MCF 10A (cell line): ENCODE measurements at regions of chr5 and their contacts with region 1.

Region 1: GRCh38 chr5:127517480-127518318 is at the start of gene PRRC1:
- DNase-seq: peak; percentile 89
- H3K4me3 Mint-ChIP-seq: peak within 1 kb of the TSS; percentile 77
- H3K27ac Mint-ChIP-seq: peak within 1 kb of the TSS; percentile 59
- H3K4me1 Mint-ChIP-seq: peaks cover 22% of the 10 kb centered on the region
- H3K27me3 Mint-ChIP-seq: no peaks in the 10 kb centered on the region
- CTCF ChIP-seq: no peak
- total RNA-seq, gene PRRC1: 109 and 121 TPM in 2 replicates

Region 2: DNA sequence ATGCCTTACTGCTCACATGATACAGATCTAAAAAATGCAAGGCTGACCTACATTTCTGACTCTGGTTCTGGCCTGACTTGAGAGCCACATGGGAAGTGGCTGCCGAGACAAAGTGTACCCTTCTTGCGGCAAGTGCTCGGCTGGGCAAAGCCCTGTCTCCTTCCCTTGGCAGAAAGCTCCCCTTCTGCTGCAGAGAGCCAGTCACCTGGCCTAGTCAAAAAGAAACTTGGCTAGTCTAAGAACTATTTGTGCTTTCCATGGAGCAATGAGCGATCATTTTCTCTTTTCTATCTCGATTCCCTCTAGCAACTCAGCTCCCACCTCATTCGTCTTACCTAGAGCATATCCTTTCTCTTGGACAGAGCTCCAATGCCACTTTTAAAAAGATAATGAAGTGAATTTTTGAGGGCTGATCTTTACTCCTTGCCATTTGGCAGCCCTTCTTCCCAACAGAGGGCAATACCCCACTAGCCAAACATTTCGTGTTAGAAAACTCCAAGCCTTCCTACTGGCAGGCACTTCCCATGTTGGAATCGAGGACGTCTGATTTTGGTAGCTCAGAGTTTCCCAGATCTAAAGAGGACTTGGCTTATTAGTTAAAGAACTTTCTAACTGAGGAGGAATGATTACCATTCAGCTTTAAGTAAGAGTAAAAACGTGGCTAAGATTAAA is 108.3 kb before region 1 on chr5:
- CTCF ChIA-PET with region 1: no interaction called
- POLR2A ChIA-PET with region 1: no interaction called
- intact Hi-C with region 1: no loop called
- DNase-seq: no peak
- H3K4me3 Mint-ChIP-seq: no peak overlapping the region
- H3K27ac Mint-ChIP-seq: no peak overlapping the region
- H3K4me1 Mint-ChIP-seq: no peaks in the 10 kb centered on the region
- H3K27me3 Mint-ChIP-seq: no peaks in the 10 kb centered on the region
- CTCF ChIP-seq: no peak

Region 3: GRCh38 chr5:127505905-127506304 is 11.8 kb before region 1 on chr5:
- CTCF ChIA-PET with region 1: interaction called, 4 read pairs
- POLR2A ChIA-PET with region 1: interaction called, 16 read pairs
- intact Hi-C with region 1: no loop called
- DNase-seq: no peak
- H3K4me3 Mint-ChIP-seq: no peak overlapping the region
- H3K27ac Mint-ChIP-seq: no peak overlapping the region
- H3K4me1 Mint-ChIP-seq: no peaks in the 10 kb centered on the region
- H3K27me3 Mint-ChIP-seq: peaks cover 40% of the 10 kb centered on the region
- CTCF ChIP-seq: no peak

Region 4: DNA sequence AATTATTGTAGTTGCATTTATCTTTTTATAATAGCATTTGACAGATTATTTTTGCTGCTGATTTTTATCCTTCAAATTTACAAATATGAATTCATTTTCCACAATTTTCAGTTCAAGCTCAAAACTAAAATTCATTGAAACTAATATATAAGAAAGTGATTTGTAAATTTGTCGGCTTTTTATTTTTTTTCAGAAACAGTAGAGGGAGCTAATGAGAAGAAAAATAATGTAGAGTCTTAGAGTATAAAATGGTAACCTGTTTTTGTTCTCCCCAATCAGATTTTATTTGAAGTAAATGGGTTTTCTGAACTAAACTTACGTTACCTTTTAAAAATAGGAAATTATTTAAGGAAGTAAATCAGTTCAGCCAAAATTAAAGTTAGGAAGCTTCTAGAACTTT is 19.0 kb after region 1 on chr5:
- CTCF ChIA-PET with region 1: interaction called, 8 read pairs
- POLR2A ChIA-PET with region 1: interaction called, 12 read pairs
- intact Hi-C with region 1: no loop called
- DNase-seq: peak; percentile 26
- H3K4me3 Mint-ChIP-seq: no peak overlapping the region
- H3K27ac Mint-ChIP-seq: no peak overlapping the region
- H3K4me1 Mint-ChIP-seq: no peaks in the 10 kb centered on the region
- H3K27me3 Mint-ChIP-seq: no peaks in the 10 kb centered on the region
- CTCF ChIP-seq: peak; percentile 45

Region 5: DNA sequence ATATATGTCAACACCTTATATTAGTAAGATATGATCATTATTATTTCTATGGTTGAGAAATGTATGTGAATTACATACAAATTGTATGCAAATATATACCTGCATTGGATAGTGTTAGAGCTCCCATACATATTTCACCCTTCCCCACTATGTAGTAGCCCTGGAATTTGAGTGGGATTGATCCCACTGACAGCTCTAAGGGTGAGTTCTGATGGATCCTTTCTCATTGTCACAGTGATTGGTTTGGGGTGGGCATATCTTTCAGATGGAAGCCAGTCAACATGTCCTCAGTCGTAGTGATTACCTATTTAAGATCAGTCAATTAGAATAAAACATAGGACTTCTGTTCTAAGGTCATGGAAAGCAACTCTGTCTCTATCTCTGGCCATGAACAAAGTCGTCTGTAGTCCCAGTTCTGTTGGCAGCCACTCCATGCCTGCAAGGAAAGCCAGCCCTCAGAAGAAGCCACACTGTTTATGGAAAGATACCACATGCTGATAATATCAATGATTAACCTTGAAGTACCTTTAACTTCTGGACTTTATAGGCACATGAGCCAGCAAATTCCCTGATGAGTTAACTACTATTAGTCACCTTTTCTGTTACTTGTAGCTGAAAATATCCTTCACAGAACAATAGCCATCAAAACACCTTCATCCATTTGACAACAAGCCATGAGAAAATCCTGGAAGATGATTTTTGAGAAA is 180.3 kb after region 1 on chr5:
- CTCF ChIA-PET with region 1: no interaction called
- POLR2A ChIA-PET with region 1: no interaction called
- intact Hi-C with region 1: no loop called
- DNase-seq: peak; percentile 41
- H3K4me3 Mint-ChIP-seq: no peak overlapping the region
- H3K27ac Mint-ChIP-seq: peak overlapping the region; percentile 40
- H3K4me1 Mint-ChIP-seq: peaks cover 21% of the 10 kb centered on the region
- H3K27me3 Mint-ChIP-seq: peaks cover 25% of the 10 kb centered on the region
- CTCF ChIP-seq: no peak